IMR-90 (cell line): ENCODE measurements at regions of chr13 and their contacts with region 1.

Region 1: DNA sequence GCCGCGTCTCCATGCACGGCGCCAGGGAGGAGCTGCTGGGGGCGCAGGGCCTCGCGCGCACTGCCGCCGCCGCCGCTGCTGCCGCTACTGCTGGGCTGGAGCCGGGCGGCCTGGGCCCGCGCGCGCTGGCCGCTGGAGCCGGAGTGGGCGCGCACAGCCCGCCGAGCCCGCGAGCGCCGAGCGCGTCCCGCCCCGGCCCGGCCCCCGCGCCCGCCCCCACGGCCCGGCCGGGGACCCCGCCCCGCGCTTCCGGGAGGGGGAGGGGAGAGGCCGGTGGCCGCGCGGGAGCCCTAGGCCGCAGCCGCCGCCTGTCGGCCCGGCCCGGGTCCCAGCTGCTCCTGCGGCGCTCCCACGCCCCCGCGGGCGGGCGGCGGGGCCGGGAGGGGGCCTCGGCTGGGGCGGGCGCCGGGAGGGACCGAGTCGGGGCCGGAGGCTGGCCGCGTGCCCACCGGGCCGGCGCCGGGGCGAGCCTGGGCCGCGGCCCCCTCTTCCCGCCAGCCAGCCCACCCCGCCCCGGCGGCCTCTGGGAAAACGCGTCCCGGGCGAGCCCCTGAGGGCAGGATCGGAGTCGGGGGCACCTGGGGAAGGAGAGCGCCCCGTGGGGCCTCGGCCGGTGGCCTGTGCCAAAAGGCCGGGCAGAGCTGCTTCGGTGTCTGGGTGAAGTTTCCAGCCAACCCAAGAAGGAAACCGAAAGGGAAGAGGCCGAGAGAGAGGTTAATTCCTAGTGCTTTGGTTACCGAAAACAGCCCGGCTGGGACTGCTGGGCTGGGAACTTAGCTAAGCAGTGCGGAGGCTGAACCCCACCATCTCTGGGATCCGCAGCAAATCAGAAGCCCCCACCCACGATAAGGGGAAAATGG is at the start of gene STK24:
- DNase-seq: peak; percentile 74
- ATAC-seq: peak; percentile 88
- H3K4me3 ChIP-seq: peak within 1 kb of the TSS; percentile 74
- H3K27ac ChIP-seq: peak within 1 kb of the TSS; percentile 88
- H3K4me1 ChIP-seq: peaks cover 7% of the 10 kb centered on the region
- H3K27me3 ChIP-seq: no peaks in the 10 kb centered on the region
- CTCF ChIP-seq: 0 out of 2 replicates have a peak, but pooled peaks have one; percentile 2
- POLR2A ChIP-seq: peak; percentile 77
- RAD21 ChIP-seq: no peak
- total RNA-seq, gene STK24: 29.2 and 36.1 TPM in 2 replicates

Region 2: GRCh38 chr13:98466634-98467236 is 110.5 kb before region 1 on chr13:
- CTCF ChIA-PET with region 1: interaction called, 3 read pairs
- POLR2A ChIA-PET with region 1: no interaction called
- dilution Hi-C with region 1: no loop called
- in situ Hi-C with region 1: no loop called
- intact Hi-C with region 1: loop called (anchors 5 kb)
- DNase-seq: peak; percentile 55
- ATAC-seq: peak; percentile 77
- H3K4me3 ChIP-seq: no peak overlapping the region
- H3K27ac ChIP-seq: no peak overlapping the region
- H3K4me1 ChIP-seq: 0 out of 2 replicates have a peak, but pooled peaks cover 3% of the 10 kb centered on the region
- H3K27me3 ChIP-seq: no peaks in the 10 kb centered on the region
- CTCF ChIP-seq: peak; percentile 70
- POLR2A ChIP-seq: no peak
- RAD21 ChIP-seq: peak; percentile 59

Region 3: DNA sequence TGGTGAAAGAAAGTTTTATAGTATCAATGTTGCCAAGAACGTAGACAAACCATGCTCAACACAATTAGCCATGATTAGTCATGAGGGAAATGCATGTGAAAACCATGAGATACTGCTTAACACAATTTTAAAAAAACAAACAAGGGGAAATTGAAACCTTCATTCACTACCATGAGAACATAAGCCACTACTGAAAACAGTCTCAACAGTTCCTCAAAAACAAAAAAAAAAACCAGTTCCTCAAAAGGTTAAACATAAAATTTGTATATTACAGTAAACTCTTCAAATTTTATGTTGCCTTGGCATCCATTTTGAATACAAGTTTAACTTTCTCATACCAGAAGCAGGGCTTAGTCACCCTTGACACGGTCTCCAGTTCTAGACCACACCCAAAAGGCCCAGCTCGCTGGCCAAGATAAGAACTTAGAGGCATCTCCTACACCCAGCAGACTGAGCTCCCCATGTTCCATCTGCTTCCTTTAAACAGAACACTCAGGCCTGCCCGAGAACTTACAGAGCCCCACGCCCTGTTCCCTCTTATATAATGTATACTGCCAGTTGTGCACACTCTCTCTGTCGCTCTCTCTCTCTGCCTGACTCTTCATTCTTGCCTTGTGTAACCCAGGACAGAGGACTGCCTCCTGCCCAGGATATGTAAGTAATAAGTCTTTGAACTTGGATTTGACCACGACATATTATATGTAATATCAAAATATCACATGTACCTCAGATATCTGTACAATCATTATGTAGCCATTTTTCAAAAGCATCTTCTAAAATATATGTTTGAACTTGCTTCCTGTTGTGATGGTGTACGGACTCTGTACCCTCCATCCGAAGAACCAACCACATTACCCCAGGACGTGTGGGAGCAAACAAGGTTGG is 67.7 kb before region 1 on chr13:
- CTCF ChIA-PET with region 1: no interaction called
- POLR2A ChIA-PET with region 1: no interaction called
- dilution Hi-C with region 1: no loop called
- in situ Hi-C with region 1: no loop called
- intact Hi-C with region 1: loop called (anchors 5 kb)
- DNase-seq: peak; percentile 92
- ATAC-seq: peak; percentile 84
- H3K4me3 ChIP-seq: no peak overlapping the region
- H3K27ac ChIP-seq: peak overlapping the region; percentile 82
- H3K4me1 ChIP-seq: peaks cover 27% of the 10 kb centered on the region
- H3K27me3 ChIP-seq: no peaks in the 10 kb centered on the region
- CTCF ChIP-seq: no peak
- POLR2A ChIP-seq: peak; percentile 54; the same call in 1 of the 2 replicates
- RAD21 ChIP-seq: no peak

Region 4: DNA sequence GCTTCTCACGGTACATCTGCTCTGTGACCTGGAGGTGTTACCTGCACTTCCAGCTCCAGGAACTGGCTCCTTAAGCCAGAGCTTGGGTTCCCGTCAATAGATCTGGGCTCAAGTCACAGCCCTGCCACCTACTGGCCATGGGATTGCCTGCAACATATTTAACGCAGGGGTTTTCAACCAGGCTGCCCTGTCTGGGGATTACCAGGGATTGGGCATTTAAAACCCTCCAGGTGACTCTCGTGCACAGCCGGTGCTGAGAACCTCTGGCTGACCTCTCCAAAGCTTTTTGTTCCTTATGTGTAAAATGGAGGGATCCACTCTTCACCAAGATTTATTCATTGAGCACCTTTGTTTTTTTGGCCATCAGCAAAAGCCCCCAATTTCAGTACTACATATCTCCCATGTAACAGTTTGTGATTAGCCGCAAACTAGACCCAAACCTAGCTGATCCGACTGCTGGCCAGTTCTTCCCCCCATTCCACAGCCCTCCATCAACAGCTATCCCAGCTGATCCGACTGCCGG is 76.3 kb after region 1 on chr13:
- CTCF ChIA-PET with region 1: no interaction called
- POLR2A ChIA-PET with region 1: no interaction called
- dilution Hi-C with region 1: no loop called
- in situ Hi-C with region 1: loop called (anchors 5 kb)
- intact Hi-C with region 1: loop called (anchors 2 kb)
- DNase-seq: peak; percentile 71
- ATAC-seq: peak; percentile 100
- H3K4me3 ChIP-seq: no peak overlapping the region
- H3K27ac ChIP-seq: no peak overlapping the region
- H3K4me1 ChIP-seq: no peaks in the 10 kb centered on the region
- H3K27me3 ChIP-seq: peaks cover 2% of the 10 kb centered on the region; the same call in 1 of the 2 replicates
- CTCF ChIP-seq: peak; percentile 87
- POLR2A ChIP-seq: no peak
- RAD21 ChIP-seq: peak; percentile 85